CD8-positive, alpha-beta T cell (primary cell): ENCODE measurements at regions of chr16 and their contacts with region 1.

Region 1: GRCh38 chr16:71961066-71962039 is 38.8 kb downstream of the PKD1L3 start:
- DNase-seq: peak; percentile 67 to 90 (median 82)
- ATAC-seq: peak; percentile 92
- H3K4me3 ChIP-seq: no peak overlapping the region
- H3K4me3 Mint-ChIP-seq: no peak overlapping the region
- H3K27ac ChIP-seq: no peak overlapping the region
- H3K27ac Mint-ChIP-seq: no peak overlapping the region
- H3K4me1 ChIP-seq: peaks cover 5% of the 10 kb centered on the region
- H3K4me1 Mint-ChIP-seq: peaks cover 5% of the 10 kb centered on the region
- H3K27me3 ChIP-seq: no peaks in the 10 kb centered on the region
- H3K27me3 Mint-ChIP-seq: no peaks in the 10 kb centered on the region
- CTCF ChIP-seq: peak; percentile 83

Region 2: DNA sequence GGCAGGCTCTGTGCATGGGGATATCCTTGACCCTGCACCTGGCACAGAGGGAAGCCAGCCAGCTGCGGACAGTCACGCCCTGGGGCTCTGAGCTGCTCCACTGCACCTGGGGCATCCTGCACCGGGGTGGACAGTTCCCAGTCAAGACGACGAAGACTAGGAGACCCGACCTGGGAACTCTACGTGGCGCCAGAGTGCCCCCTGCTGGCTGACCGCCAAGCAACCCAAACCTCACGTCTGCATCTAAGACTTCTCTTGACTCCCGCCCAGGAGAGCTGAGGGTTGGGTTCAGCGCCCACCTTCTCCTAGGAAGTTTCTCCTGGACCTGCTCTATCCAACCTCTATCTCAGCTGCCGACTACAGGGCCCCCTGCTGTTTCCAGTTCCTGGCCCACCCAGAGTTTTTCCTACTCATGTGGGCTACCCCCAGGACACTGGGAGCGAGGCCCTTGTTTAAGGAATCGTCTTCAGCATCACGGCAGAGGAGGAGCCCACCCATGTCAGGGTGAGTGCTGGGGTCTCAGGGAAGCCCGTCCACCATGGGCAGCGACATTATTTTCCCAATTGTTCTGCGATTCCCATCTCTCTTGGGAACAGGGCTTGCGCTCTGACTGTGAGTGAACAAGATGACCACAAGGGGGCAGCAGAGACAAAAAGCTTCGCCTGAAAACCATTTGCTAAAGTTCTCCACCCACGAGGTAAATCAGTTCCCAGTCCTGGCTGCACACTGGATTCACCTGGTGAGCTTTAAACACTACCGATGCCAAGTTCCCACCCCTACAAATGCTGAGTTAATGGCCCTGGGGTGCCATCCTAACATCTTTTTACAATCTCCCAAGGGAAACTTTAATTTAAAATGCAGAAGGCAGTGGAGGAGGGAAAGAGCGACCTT is 548.8 kb before region 1 on chr16:
- CTCF ChIA-PET with region 1: interaction called, 4 read pairs
- POLR2A ChIA-PET with region 1: no interaction called
- intact Hi-C with region 1: loop called (anchors 2 to 5 kb)
- DNase-seq: peak; percentile 30 to 80 (median 69)
- ATAC-seq: peak; percentile 65
- H3K4me3 ChIP-seq: no peak overlapping the region
- H3K4me3 Mint-ChIP-seq: no peak overlapping the region
- H3K27ac ChIP-seq: no peak overlapping the region
- H3K27ac Mint-ChIP-seq: no peak overlapping the region
- H3K4me1 ChIP-seq: peaks cover 6% of the 10 kb centered on the region
- H3K4me1 Mint-ChIP-seq: peaks cover 11% of the 10 kb centered on the region
- H3K27me3 ChIP-seq: no peaks in the 10 kb centered on the region
- H3K27me3 Mint-ChIP-seq: peaks cover 14% of the 10 kb centered on the region
- CTCF ChIP-seq: peak; percentile 82

Region 3: DNA sequence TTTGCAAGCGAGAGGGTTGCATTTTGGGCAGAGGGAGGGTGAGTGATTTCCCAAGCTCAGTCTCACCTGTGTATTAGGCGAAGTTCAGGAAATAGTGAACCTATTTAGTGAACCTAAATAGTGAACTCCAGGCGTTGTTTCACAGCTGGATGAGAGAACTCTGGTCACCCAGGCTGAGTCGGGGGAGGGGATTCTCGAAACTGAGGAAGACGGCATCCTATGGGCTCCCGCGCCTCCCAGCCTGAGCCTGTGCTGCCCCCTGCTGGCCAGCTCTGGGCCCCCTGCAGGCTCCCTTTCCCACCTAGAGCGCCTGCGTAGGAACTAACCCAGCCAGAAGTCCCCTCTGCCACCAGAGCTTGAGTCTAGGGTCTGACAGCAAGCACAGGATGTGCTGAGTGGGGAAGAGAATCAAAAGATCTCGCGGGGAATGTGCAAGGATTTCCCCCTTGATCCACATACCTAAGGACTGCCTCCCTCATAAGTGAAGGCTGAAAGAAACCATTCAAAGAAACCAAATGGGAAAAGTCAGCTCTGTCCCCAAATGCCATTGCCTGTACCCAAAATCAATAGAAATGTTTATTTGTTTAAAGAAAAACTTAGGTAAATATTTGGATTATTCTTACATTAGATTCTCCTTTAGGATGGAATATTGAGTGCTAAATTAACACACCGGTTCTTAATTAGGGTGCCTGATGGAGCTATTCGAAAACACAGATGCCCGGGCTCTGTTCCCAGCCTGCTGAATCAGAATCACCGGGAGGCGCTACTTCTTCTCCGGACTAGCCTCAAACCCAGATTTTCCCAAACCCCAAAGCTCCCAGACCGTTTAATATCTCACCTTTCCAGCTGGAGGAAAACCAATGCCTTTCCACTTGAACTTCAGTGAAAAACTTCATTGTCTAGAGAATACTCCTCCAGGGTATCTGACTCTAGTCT is 350.1 kb before region 1 on chr16:
- CTCF ChIA-PET with region 1: interaction called, 8 read pairs
- POLR2A ChIA-PET with region 1: no interaction called
- intact Hi-C with region 1: loop called in 1 of 2 experiments (anchors 2 kb)
- DNase-seq: peak; percentile 56 to 86 (median 79)
- ATAC-seq: peak; percentile 97
- H3K4me3 ChIP-seq: no peak overlapping the region
- H3K4me3 Mint-ChIP-seq: peak overlapping the region; percentile 22
- H3K27ac ChIP-seq: no peak overlapping the region
- H3K27ac Mint-ChIP-seq: no peak overlapping the region
- H3K4me1 ChIP-seq: no peaks in the 10 kb centered on the region
- H3K4me1 Mint-ChIP-seq: peaks cover 2% of the 10 kb centered on the region
- H3K27me3 ChIP-seq: no peaks in the 10 kb centered on the region
- H3K27me3 Mint-ChIP-seq: peaks cover 38% of the 10 kb centered on the region
- CTCF ChIP-seq: peak; percentile 88

Region 4: GRCh38 chr16:71746442-71747046 is 214.8 kb before region 1 on chr16:
- CTCF ChIA-PET with region 1: interaction called, 5 read pairs
- POLR2A ChIA-PET with region 1: no interaction called
- intact Hi-C with region 1: loop called in 1 of 2 experiments (anchors 5 kb)
- DNase-seq: peak in 4 of 9 experiments; percentile 9 to 70 (median 40)
- ATAC-seq: peak; percentile 65
- H3K4me3 ChIP-seq: no peak overlapping the region
- H3K4me3 Mint-ChIP-seq: no peak overlapping the region
- H3K27ac ChIP-seq: no peak overlapping the region
- H3K27ac Mint-ChIP-seq: no peak overlapping the region
- H3K4me1 ChIP-seq: no peaks in the 10 kb centered on the region
- H3K4me1 Mint-ChIP-seq: peaks cover 3% of the 10 kb centered on the region
- H3K27me3 ChIP-seq: no peaks in the 10 kb centered on the region
- H3K27me3 Mint-ChIP-seq: no peaks in the 10 kb centered on the region
- CTCF ChIP-seq: peak; percentile 75

Region 5: DNA sequence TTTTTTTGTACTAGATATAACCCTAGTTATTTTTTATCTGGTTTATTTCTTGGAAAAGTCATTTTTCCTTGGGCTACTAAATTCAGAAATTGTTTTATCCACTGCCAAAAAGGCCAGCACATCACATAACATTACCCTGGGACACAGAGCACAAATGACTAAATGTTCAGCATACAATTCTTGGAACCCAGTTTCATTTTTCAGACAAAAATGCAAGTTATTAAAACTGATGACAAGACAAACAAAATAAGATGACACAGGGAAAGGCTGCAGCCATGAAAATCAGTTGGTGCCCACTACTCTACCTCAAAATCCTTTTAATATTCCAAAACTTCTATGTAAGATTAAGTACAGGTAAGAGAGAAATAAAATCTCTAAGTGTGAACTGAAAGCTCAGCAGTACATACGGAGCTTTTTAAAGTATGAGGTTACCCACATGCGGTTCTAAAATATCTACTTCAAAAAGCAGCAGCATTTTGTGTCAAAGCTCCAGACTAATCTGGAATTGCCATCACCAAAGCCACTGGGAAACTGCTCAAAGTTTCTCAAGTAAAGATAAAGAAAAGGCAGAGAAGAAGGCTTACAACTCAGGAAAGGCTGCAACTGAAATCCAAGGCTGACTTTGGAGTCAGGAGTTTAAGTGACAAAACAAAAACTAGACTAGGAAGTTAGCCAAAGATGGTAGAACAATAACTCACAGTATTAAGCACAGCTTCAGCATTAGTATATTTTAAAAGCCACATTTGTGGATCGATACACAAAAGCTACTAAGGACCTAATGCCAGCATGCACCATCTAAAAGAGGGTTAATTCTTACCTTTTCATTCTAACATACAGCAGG is 194.1 kb before region 1 on chr16:
- CTCF ChIA-PET with region 1: interaction called, 7 read pairs
- POLR2A ChIA-PET with region 1: no interaction called
- intact Hi-C with region 1: loop called (anchors 5 kb)
- DNase-seq: no peak
- ATAC-seq: no peak
- H3K4me3 ChIP-seq: no peak overlapping the region
- H3K4me3 Mint-ChIP-seq: no peak overlapping the region
- H3K27ac ChIP-seq: no peak overlapping the region
- H3K27ac Mint-ChIP-seq: peak overlapping the region; percentile 12
- H3K4me1 ChIP-seq: no peaks in the 10 kb centered on the region
- H3K4me1 Mint-ChIP-seq: peaks cover 8% of the 10 kb centered on the region
- H3K27me3 ChIP-seq: no peaks in the 10 kb centered on the region
- H3K27me3 Mint-ChIP-seq: no peaks in the 10 kb centered on the region
- CTCF ChIP-seq: no peak

Region 6: GRCh38 chr16:71794943-71795342 is 166.4 kb before region 1 on chr16:
- CTCF ChIA-PET with region 1: interaction called, 10 read pairs
- POLR2A ChIA-PET with region 1: no interaction called
- intact Hi-C with region 1: no loop called
- DNase-seq: no peak
- ATAC-seq: no peak
- H3K4me3 ChIP-seq: no peak overlapping the region
- H3K4me3 Mint-ChIP-seq: peak overlapping the region; percentile 3
- H3K27ac ChIP-seq: peak overlapping the region in 1 of 2 experiments; percentile 31
- H3K27ac Mint-ChIP-seq: peak overlapping the region; percentile 32
- H3K4me1 ChIP-seq: peaks cover 53% of the 10 kb centered on the region
- H3K4me1 Mint-ChIP-seq: peaks cover 65% of the 10 kb centered on the region
- H3K27me3 ChIP-seq: no peaks in the 10 kb centered on the region
- H3K27me3 Mint-ChIP-seq: no peaks in the 10 kb centered on the region
- CTCF ChIP-seq: no peak

Region 7: DNA sequence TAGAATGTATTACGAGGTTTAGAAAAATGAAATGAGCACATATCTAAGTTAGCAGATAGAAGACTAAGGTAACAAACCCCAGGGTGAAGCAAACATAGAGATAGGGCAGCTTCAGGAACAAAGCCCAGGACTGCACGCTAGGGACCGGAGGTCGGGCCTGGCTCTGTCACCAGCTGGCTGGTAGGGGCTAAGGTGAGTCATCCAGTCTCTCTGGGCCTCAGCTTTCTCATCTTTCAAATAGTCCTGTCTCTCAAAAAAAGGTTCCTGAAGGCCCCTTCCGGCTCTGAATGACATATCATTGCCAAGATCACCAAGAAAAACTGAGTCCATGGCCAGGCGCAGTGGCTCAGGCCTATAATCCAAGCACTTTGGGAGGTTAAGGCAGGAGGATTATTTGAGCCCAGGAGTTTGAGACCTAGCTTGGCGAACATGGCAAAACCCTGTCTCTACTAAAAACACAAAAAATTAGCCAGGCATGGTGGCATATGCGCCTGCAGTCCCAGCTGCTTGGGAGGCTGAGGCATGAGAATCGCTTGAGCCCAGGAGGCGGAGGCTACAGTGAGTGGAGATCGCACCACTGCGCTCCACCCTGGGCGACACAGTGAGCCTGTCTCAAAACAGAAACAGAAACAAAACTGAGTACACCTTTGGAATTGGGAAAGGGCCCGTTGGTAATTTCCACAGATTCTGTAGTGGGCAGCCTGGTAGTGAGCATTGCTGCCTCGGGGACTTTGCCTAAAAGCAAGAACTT is 12.9 kb after region 1 on chr16:
- CTCF ChIA-PET with region 1: interaction called, 25 read pairs
- POLR2A ChIA-PET with region 1: no interaction called
- intact Hi-C with region 1: no loop called
- DNase-seq: no peak
- ATAC-seq: no peak
- H3K4me3 ChIP-seq: no peak overlapping the region
- H3K4me3 Mint-ChIP-seq: no peak overlapping the region
- H3K27ac ChIP-seq: no peak overlapping the region
- H3K27ac Mint-ChIP-seq: no peak overlapping the region
- H3K4me1 ChIP-seq: no peaks in the 10 kb centered on the region
- H3K4me1 Mint-ChIP-seq: no peaks in the 10 kb centered on the region
- H3K27me3 ChIP-seq: no peaks in the 10 kb centered on the region
- H3K27me3 Mint-ChIP-seq: peaks cover 2% of the 10 kb centered on the region
- CTCF ChIP-seq: no peak